MCF 10A (cell line): ENCODE measurements at regions of chr2 and their contacts with region 1.

Region 1: DNA sequence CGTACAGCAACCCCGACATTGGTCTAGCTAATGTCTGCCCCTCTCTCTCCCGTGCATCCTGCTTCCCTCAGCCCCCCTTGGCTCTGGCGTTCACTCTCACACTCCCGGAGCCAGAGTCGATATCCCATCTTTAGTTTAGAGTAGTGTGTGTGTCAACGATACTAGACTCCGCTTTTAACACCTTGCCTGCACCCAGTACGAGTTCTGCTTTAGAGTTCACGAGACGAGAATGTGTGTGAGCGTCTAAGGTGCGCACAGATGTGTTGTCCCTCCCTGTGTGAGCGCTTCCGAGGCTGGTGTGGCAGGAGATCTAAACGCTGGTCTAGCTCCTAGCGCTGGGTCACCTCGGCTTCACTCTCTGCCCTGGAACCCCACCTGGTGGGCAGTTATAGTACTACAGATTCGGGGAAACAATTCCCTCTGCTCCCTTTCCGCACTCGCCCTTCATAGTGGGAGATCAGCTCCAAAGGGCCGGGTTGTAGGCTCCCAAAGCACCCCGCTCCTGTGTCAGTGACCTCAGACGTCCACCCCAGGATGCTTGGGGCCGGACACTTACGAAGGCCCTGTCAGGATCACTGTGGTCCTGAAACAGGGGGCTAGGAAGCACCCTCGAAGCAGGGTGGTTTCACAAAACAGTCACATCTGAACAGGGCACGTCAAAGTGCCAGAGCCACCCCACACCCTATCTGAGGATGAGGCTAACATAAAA is 2.6 kb upstream of the CYP26B1 start:
- DNase-seq: peak; percentile 91
- H3K4me3 Mint-ChIP-seq: peak overlapping the region; percentile 79
- H3K27ac Mint-ChIP-seq: no peak overlapping the region
- H3K4me1 Mint-ChIP-seq: peaks cover 27% of the 10 kb centered on the region
- H3K27me3 Mint-ChIP-seq: peaks cover 41% of the 10 kb centered on the region
- CTCF ChIP-seq: peak; percentile 81

Region 2: GRCh38 chr2:71530641-71531332 is 619.5 kb before region 1 on chr2:
- CTCF ChIA-PET with region 1: interaction called, 9 read pairs
- POLR2A ChIA-PET with region 1: no interaction called
- intact Hi-C with region 1: loop called (anchors 5 kb)
- DNase-seq: peak; percentile 58
- H3K4me3 Mint-ChIP-seq: no peak overlapping the region
- H3K27ac Mint-ChIP-seq: no peak overlapping the region
- H3K4me1 Mint-ChIP-seq: peaks cover 4% of the 10 kb centered on the region
- H3K27me3 Mint-ChIP-seq: peaks cover 28% of the 10 kb centered on the region
- CTCF ChIP-seq: peak; percentile 58

Region 3: GRCh38 chr2:71555798-71556454 is 594.4 kb before region 1 on chr2:
- CTCF ChIA-PET with region 1: interaction called, 12 read pairs
- POLR2A ChIA-PET with region 1: no interaction called
- intact Hi-C with region 1: no loop called
- DNase-seq: no peak
- H3K4me3 Mint-ChIP-seq: no peak overlapping the region
- H3K27ac Mint-ChIP-seq: no peak overlapping the region
- H3K4me1 Mint-ChIP-seq: no peaks in the 10 kb centered on the region
- H3K27me3 Mint-ChIP-seq: no peaks in the 10 kb centered on the region
- CTCF ChIP-seq: no peak

Region 4: DNA sequence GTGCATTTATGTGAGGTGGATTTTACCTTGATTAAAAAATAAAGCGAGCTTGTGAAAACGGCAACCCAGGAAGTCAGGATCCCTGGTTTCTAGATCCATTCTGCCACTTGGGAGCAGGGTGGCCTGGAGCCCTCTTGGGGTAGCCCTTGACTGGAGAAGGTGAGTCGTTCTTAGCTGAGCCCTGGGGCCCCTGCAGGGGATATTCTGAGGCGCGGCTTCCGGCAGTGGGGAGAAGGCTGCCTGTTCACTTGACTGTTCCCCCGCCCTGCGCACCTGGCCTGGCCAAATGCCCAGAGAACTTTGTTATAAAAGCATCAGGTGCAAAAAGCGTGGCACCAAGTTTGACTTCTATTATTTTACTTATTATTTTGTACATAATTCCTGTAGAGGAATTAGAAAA is 475.0 kb before region 1 on chr2:
- CTCF ChIA-PET with region 1: no interaction called
- POLR2A ChIA-PET with region 1: no interaction called
- intact Hi-C with region 1: no loop called
- DNase-seq: peak; percentile 59
- H3K4me3 Mint-ChIP-seq: no peak overlapping the region
- H3K27ac Mint-ChIP-seq: no peak overlapping the region
- H3K4me1 Mint-ChIP-seq: no peaks in the 10 kb centered on the region
- H3K27me3 Mint-ChIP-seq: peaks cover 45% of the 10 kb centered on the region
- CTCF ChIP-seq: no peak

Region 5: DNA sequence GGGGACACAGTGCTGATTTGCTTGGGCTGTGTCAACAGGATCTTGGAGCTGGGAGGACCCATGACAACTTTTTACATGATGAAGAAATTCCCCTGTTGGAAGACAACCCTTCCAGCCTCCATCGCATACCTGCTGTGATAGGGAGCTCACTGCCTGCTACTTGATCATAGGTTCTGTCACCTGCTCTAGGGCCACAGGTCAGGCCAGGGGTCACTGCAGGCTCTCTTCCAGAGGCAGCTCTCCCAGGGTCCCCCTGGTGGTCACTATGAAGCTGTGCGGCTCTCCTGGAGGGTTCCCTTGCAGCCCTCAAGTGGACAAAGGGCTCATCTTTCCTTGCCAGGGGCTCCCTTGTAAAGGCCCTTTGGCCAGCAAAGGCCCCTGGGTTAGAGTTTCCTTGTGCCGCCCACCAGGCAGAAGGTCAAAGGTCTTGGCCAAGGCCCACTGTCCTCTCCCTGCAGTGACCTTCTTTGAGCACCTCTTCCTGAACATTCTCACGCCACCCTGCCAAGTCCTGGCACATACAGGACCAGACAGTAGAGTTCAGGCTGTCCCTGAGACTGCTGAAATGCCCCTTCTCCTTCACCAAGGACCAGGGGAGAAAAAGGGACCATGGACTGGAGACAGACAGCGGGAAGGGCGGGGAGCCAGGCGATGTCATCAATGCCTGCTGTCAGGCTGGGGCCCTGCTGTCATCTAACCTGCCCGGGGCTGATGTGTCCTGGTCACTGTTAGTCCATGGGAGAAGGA is 351.9 kb before region 1 on chr2:
- CTCF ChIA-PET with region 1: interaction called, 65 read pairs
- POLR2A ChIA-PET with region 1: no interaction called
- intact Hi-C with region 1: loop called (anchors 1 kb)
- DNase-seq: peak; percentile 61
- H3K4me3 Mint-ChIP-seq: no peak overlapping the region
- H3K27ac Mint-ChIP-seq: no peak overlapping the region
- H3K4me1 Mint-ChIP-seq: no peaks in the 10 kb centered on the region
- H3K27me3 Mint-ChIP-seq: no peaks in the 10 kb centered on the region
- CTCF ChIP-seq: peak; percentile 72

Region 6: DNA sequence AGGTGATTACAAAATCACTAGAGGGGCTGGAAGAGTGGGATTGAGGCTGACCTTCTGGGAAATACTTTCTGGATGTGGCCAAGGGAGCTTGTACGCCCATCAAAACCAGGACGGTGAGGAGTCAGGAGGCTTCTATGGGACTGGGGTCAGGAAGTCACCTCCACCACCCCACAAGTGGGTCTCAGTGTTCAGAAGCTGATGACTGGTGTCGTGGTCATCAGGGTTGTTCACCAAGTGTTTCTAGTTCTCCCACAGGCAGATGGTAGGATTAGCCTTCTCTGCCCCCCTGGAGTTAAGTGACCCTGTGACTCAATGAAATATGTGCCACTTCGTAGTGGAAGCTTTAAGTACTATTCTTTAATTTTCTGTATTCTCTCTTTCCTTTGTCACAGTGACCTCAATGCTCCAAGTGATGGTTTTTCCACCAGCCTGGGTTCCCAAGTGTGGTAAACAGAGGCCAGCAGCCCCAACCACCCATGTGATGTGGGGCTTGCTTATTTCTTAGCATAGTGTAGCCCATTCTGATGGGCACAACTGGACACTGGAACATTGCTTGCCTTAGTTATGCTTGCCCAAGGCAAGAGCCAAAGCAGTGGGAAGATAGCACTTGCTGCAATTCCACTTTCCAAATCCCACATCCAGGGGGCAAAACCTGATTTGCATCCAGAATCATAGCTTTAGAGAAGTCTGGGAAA is 261.4 kb before region 1 on chr2:
- CTCF ChIA-PET with region 1: interaction called, 10 read pairs
- POLR2A ChIA-PET with region 1: no interaction called
- intact Hi-C with region 1: loop called (anchors 5 kb)
- DNase-seq: no peak
- H3K4me3 Mint-ChIP-seq: no peak overlapping the region
- H3K27ac Mint-ChIP-seq: no peak overlapping the region
- H3K4me1 Mint-ChIP-seq: peaks cover 15% of the 10 kb centered on the region
- H3K27me3 Mint-ChIP-seq: no peaks in the 10 kb centered on the region
- CTCF ChIP-seq: no peak

Region 7: GRCh38 chr2:72126186-72127100 is 23.9 kb before region 1 on chr2:
- CTCF ChIA-PET with region 1: no interaction called
- POLR2A ChIA-PET with region 1: no interaction called
- intact Hi-C with region 1: no loop called
- DNase-seq: no peak
- H3K4me3 Mint-ChIP-seq: no peak overlapping the region
- H3K27ac Mint-ChIP-seq: no peak overlapping the region
- H3K4me1 Mint-ChIP-seq: peaks cover 6% of the 10 kb centered on the region
- H3K27me3 Mint-ChIP-seq: no peaks in the 10 kb centered on the region
- CTCF ChIP-seq: no peak

Region 8: GRCh38 chr2:72579591-72580180 is 429.4 kb after region 1 on chr2:
- CTCF ChIA-PET with region 1: interaction called, 16 read pairs
- POLR2A ChIA-PET with region 1: no interaction called
- intact Hi-C with region 1: loop called (anchors 1 kb)
- DNase-seq: peak; percentile 62
- H3K4me3 Mint-ChIP-seq: no peak overlapping the region
- H3K27ac Mint-ChIP-seq: no peak overlapping the region
- H3K4me1 Mint-ChIP-seq: no peaks in the 10 kb centered on the region
- H3K27me3 Mint-ChIP-seq: no peaks in the 10 kb centered on the region
- CTCF ChIP-seq: peak; percentile 65